Kidney (tissue), 22 donors: ENCODE measurements at regions of chr17 and their contacts with region 1.

Region 1: GRCh38 chr17:16521070-16521727 is 29.2 kb upstream of the LRRC75A start:
- DNase-seq: peak in 4 of 5 donors; percentile 83 to 95 (median 88)
- H3K4me3 ChIP-seq: no peak overlapping the region
- H3K27ac ChIP-seq: no peak overlapping the region
- H3K4me1 ChIP-seq: peaks cover 0 to 3% (median 0%) of the 10 kb centered on the region in 3 donors
- H3K27me3 ChIP-seq: no peaks in the 10 kb centered on the region
- CTCF ChIP-seq: peak; percentile 94

Region 2: DNA sequence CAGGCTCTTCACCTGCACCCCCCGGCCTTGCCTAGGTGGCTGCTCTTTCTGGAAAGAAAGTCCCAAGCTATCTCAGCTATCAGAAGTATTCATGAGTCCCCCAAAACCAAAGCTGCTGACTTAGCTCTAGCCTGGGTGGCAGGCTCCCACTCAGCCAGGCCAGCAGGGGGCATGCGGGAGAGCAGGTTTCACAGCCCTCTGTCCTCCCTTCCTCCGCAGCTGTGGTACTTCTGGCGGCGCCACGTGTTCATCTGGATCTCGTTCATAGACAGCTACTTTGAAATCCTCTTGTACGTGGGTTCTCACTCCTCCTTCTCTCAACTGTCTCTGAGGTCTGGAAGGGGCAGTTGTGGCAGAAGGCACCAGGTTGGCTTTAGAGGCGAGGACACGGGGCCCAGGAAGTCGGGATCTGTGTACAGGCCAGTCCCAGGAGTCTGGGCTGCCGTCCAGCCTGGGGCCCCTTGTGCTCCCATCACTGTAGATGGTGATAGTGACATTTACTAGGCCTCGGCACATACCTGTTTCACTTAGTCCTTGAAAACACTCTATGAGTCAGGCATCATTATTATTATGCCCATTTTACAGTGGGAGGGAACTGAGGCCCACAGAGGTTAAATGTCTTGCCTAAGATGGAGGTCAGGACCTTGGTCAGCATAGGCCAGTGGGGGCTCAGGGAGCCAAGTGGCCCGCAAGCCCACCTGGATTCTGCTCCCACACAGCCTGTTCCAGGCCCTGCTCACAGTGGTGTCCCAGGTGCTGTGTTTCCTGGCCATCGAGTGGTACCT is 92.9 kb before region 1 on chr17:
- intact Hi-C with region 1: no loop called
- DNase-seq: peak in 3 of 5 donors; percentile 48 to 64 (median 61)
- H3K4me3 ChIP-seq: no peak overlapping the region
- H3K27ac ChIP-seq: no peak overlapping the region
- H3K4me1 ChIP-seq: no peaks in the 10 kb centered on the region
- H3K27me3 ChIP-seq: no peaks in the 10 kb centered on the region
- CTCF ChIP-seq: peak; percentile 52

Region 3: DNA sequence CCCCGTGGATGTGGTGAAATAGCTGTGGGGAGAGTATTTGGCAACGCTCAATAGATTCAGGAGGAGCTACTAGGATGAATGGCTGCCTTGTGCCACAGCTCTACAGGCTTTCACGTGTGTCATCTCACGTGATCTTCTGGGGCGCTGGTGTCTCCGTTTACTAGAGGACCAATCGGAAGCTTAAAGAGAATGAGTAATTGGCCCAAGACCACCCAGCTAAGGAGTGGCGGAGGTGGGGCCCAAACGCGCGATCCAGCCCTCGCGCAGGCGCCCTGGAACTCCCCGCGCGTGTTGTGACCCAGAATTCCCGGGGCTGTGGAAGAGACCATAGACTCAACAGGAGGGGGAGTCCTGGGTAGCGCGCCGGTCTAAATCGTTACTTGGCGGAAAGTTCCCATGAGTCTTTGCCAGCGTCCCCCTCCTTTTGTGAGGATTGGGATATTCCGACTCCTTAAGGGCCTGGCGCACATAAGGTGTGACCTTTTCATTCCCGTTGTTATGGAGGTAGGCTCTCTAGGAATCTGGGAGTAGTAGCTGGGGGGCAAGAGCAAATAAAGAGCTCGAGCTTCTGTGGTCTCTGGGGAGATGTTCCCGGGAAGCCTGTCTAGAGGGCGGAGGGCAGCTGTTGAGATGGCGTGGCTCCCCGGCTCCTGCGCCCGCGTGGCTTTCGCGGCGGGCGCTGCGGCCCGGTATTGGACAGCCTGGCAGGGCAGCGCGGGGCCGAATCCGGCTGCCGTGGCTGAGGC is 82.5 kb before region 1 on chr17:
- intact Hi-C with region 1: no loop called
- DNase-seq: peak; percentile 98 to 100 (median 99)
- H3K4me3 ChIP-seq: peak overlapping the region; percentile 89 to 99 (median 98)
- H3K27ac ChIP-seq: peak overlapping the region; percentile 85 to 92
- H3K4me1 ChIP-seq: peaks cover 3 to 24% (median 8%) of the 10 kb centered on the region in 3 donors
- H3K27me3 ChIP-seq: no peaks in the 10 kb centered on the region
- CTCF ChIP-seq: no peak

Region 4: GRCh38 chr17:16453493-16453851 is 67.7 kb before region 1 on chr17:
- intact Hi-C with region 1: loop called (anchors 5 kb)
- DNase-seq: no peak
- H3K4me3 ChIP-seq: no peak overlapping the region
- H3K27ac ChIP-seq: no peak overlapping the region
- H3K4me1 ChIP-seq: peaks cover 0 to 2% (median 0%) of the 10 kb centered on the region in 3 donors
- H3K27me3 ChIP-seq: no peaks in the 10 kb centered on the region
- CTCF ChIP-seq: no peak